ENCODE measurements at regions of chr21 and their contacts with region 1.

Region 1: GRCh38 chr21:46635324-46636172 is at the start of gene PRMT2:
- DNase-seq: peak; percentile 98
- ATAC-seq: peak; percentile 79
- H3K4me3 ChIP-seq: peak within 1 kb of the TSS; percentile 90
- H3K27ac ChIP-seq: peak within 1 kb of the TSS; percentile 97
- H3K4me1 ChIP-seq: peaks cover 50% of the 10 kb centered on the region
- H3K27me3 ChIP-seq: no peaks in the 10 kb centered on the region
- CTCF ChIP-seq: no peak; the same call in 1 of the 2 replicates
- total RNA-seq, gene PRMT2: 101 and 128 TPM in 2 replicates

Region 2: GRCh38 chr21:45874716-45875415 is 760.7 kb before region 1 on chr21:
- CTCF ChIA-PET with region 1: no interaction called
- POLR2A ChIA-PET with region 1: interaction called, 19 read pairs
- intact Hi-C with region 1: no loop called
- DNase-seq: peak; percentile 76
- ATAC-seq: peak; percentile 77
- H3K4me3 ChIP-seq: 0 out of 2 replicates have a peak overlapping the region, but pooled peaks have one; percentile 24
- H3K27ac ChIP-seq: peak overlapping the region; percentile 55
- H3K4me1 ChIP-seq: peaks cover 13% of the 10 kb centered on the region
- H3K27me3 ChIP-seq: no peaks in the 10 kb centered on the region
- CTCF ChIP-seq: no peak

Region 3: GRCh38 chr21:46194374-46195308 is 440.9 kb before region 1 on chr21:
- CTCF ChIA-PET with region 1: no interaction called
- POLR2A ChIA-PET with region 1: no interaction called
- intact Hi-C with region 1: no loop called
- DNase-seq: no peak
- ATAC-seq: no peak
- H3K4me3 ChIP-seq: no peak overlapping the region
- H3K27ac ChIP-seq: no peak overlapping the region
- H3K4me1 ChIP-seq: peaks cover 12% of the 10 kb centered on the region; the same call in 1 of the 2 replicates
- H3K27me3 ChIP-seq: no peaks in the 10 kb centered on the region
- CTCF ChIP-seq: no peak

Region 4: GRCh38 chr21:46442938-46443337 is 192.6 kb before region 1 on chr21:
- CTCF ChIA-PET with region 1: no interaction called
- POLR2A ChIA-PET with region 1: interaction called, 10 read pairs
- intact Hi-C with region 1: no loop called
- DNase-seq: no peak
- ATAC-seq: no peak
- H3K4me3 ChIP-seq: no peak overlapping the region
- H3K27ac ChIP-seq: no peak overlapping the region
- H3K4me1 ChIP-seq: no peaks in the 10 kb centered on the region
- H3K27me3 ChIP-seq: no peaks in the 10 kb centered on the region
- CTCF ChIP-seq: no peak

Region 5: DNA sequence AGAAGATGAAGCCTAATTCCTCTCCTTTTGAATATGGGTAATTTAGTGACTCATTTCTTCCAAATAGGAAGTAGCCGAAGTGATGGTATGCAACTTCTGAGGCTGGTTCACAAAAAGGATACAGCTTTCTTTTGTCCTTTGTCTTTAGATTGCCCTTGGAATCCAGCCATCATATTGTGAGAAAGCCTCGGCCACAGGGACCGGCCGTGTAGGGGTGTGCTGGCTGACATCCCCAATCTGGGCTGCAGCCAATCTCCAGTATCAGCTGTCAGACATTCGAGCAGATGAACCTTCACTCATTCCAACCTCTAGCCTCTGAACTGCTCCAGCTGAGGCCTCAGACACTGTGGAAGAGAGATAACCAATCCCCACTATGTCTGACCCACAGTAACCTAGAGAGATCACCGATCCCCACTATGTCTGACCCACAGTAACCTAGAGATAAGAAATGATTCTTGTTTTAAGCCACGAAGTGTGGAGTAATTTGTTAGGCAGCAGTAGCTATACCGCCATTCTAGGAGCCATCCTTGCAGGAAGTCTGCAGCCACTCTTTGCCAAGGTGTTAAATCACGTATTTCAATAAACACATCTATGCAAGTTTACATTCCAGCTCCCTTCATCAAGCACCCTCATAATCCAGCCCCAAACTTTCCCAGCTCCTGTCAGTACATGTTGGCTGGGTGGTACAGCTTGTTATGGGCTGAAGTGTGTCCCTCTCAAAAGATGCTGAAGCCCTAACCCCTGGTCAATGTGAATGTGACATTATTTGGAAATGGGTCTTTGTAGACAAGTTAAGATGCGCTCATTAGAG is 179.8 kb before region 1 on chr21:
- CTCF ChIA-PET with region 1: no interaction called
- POLR2A ChIA-PET with region 1: no interaction called
- intact Hi-C with region 1: no loop called
- DNase-seq: peak; percentile 64
- ATAC-seq: no peak
- H3K4me3 ChIP-seq: no peak overlapping the region
- H3K27ac ChIP-seq: no peak overlapping the region
- H3K4me1 ChIP-seq: peaks cover 28% of the 10 kb centered on the region
- H3K27me3 ChIP-seq: no peaks in the 10 kb centered on the region
- CTCF ChIP-seq: no peak

Region 6: DNA sequence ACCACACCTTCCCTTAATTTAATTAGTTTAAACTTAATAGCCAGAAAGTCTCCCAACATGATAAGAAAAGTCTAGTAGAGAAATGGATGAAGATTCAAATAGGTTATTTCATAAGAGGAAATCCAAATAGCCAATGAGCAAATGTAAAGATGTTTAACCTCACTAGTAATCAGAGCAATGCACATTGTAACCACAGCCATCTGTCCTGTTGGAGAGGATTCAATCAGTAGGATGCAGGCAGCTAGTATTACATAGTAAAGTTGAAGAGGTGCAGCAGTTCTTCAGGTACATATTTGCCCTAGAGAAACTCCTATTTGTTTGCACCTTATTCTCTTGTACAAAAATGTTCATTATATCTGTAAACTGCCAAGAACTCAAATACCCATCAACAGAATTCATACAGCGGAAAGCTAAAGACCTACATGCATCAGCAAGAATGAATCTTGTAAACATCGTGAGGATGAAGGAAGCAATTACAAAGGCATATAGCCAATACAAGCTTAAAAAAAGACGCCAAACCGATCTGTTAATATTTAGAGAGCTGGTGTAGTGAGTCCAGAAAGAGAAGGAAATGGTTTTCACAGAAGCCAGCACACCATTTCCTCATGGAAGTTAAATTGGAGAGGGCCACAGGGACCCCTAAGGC is 148.9 kb before region 1 on chr21:
- CTCF ChIA-PET with region 1: no interaction called
- POLR2A ChIA-PET with region 1: no interaction called
- intact Hi-C with region 1: no loop called
- DNase-seq: no peak
- ATAC-seq: no peak
- H3K4me3 ChIP-seq: no peak overlapping the region
- H3K27ac ChIP-seq: no peak overlapping the region
- H3K4me1 ChIP-seq: no peaks in the 10 kb centered on the region
- H3K27me3 ChIP-seq: no peaks in the 10 kb centered on the region
- CTCF ChIP-seq: no peak

Region 7: GRCh38 chr21:46500224-46500856 is 135.2 kb before region 1 on chr21:
- CTCF ChIA-PET with region 1: no interaction called
- POLR2A ChIA-PET with region 1: interaction called, 11 read pairs
- intact Hi-C with region 1: no loop called
- DNase-seq: peak; percentile 85
- ATAC-seq: peak; percentile 83
- H3K4me3 ChIP-seq: peak overlapping the region; percentile 31
- H3K27ac ChIP-seq: peak overlapping the region; percentile 87
- H3K4me1 ChIP-seq: peaks cover 40% of the 10 kb centered on the region
- H3K27me3 ChIP-seq: no peaks in the 10 kb centered on the region
- CTCF ChIP-seq: no peak